Ascending aorta (tissue), 2 donors: ENCODE measurements at regions of chr4 and their contacts with region 1.

Region 1: GRCh38 chr4:145732895-145733880 is 53.2 kb downstream of the C4orf51 start:
- DNase-seq: peak; percentile 75 to 98
- H3K4me3 ChIP-seq: peak overlapping the region; percentile 74 to 77
- H3K27ac ChIP-seq: peak overlapping the region; percentile 99
- H3K4me1 ChIP-seq: peaks cover 13 to 32% of the 10 kb centered on the region in 2 donors
- H3K27me3 ChIP-seq: no peaks in the 10 kb centered on the region
- CTCF ChIP-seq: peak in 1 of 3 experiments; percentile 5

Region 2: DNA sequence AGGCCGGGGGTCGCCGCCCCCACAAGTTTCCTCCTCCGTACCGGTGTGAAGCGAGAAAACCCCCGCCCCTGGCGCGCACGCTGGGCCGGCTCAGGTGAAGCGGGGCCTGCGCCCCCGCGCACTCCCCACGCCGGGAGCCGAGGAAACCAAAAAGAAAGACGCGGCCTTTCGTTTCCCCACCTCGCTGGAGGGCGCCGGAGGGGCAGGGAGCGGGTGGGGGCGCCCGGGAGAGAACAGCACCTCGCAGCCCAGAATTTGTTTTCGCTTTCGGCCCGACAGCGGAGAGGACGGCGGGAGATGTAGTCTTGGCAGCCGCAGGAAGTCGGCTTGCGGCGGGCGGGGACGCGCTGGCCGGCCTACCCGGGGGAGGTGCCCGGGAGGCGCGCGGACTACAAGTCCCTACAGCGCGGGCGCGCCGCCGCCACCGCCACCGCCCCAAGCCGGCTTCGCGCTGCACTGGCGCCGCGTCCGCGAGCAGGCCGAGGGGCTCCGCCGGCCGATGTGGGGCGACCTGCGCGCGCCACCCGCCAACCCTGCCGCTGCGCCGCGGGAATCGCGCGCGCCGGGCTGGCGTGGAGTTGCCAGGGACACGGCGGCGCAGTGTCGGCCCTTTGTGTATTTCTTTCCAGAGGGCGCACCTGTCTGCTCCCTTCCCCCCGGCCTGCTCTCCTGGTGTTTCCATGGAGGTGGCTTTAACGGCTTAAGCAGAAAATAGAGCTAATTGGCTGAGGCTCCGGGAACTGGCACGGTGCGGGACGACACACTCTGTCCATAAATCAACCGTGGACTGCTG is 552.7 kb before region 1 on chr4 and contains the start of gene OTUD4:
- intact Hi-C with region 1: loop called (anchors 2 kb)
- DNase-seq: peak; percentile 84 to 98
- H3K4me3 ChIP-seq: peak within 1 kb of the TSS; percentile 91 to 93
- H3K27ac ChIP-seq: peak within 1 kb of the TSS; percentile 94 to 99
- H3K4me1 ChIP-seq: peaks cover 0 to 14% of the 10 kb centered on the region in 2 donors
- H3K27me3 ChIP-seq: no peaks in the 10 kb centered on the region
- CTCF ChIP-seq: peak in 2 of 3 experiments; percentile 13 to 23
- total RNA-seq, gene OTUD4: 81.4 TPM

Region 3: DNA sequence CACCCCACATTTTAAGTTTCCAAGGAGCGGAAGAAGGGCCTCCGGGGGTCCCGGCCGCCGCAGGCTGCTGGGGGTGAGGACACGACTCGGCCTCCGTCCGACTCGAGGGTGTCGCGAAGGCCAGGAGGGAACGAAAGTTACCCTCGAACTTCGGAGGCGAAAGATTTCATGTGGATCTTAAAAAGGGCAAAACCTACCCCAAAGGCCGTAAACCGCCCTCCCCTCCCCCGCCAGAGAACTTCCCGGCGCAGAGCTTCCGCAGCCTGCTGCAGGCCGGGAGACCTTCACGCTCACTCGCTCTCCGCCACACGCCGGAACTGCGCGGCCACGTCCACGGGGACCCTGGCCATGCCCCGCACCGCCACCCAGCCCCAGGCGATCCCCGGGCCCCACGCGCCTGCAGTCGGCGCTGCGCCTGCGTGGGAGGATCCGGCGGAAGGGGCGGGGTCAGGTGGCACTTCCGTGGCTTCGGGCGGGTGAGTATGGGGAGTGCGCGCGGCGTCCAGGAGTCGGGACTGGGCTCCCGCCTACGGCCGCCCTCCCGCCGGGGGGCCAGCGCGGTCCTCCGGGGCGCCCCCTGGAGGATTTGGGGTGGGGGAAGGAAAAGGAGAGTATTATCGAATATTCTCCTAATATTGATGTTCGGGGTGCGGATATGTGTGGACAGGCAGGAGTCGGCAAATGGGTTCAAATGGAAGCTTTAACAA is 114.1 kb before region 1 on chr4 and contains the start of gene MMAA:
- intact Hi-C with region 1: loop called (anchors 2 kb)
- DNase-seq: peak; percentile 82 to 97
- H3K4me3 ChIP-seq: peak within 1 kb of the TSS; percentile 78 to 89
- H3K27ac ChIP-seq: peak within 1 kb of the TSS; percentile 95 to 98
- H3K4me1 ChIP-seq: peaks cover 0 to 5% of the 10 kb centered on the region in 2 donors
- H3K27me3 ChIP-seq: no peaks in the 10 kb centered on the region
- CTCF ChIP-seq: peak; percentile 44 to 67 (median 67)
- total RNA-seq, gene MMAA: 3.9 TPM

Region 4: GRCh38 chr4:145887241-145887991 is 154.2 kb after region 1 on chr4:
- intact Hi-C with region 1: loop called (anchors 2 kb)
- DNase-seq: no peak
- H3K4me3 ChIP-seq: peak overlapping the region in 1 of 2 donors; percentile 12
- H3K27ac ChIP-seq: peak overlapping the region; percentile 78 to 81
- H3K4me1 ChIP-seq: peaks cover 5 to 16% of the 10 kb centered on the region in 2 donors
- H3K27me3 ChIP-seq: no peaks in the 10 kb centered on the region
- CTCF ChIP-seq: peak in 1 of 3 experiments; percentile 28

Region 5: GRCh38 chr4:146522098-146522868 is 789.1 kb after region 1 on chr4:
- intact Hi-C with region 1: loop called (anchors 5 kb)
- DNase-seq: peak; percentile 53 to 94
- H3K4me3 ChIP-seq: peak overlapping the region; percentile 81 to 94
- H3K27ac ChIP-seq: peak overlapping the region; percentile 63 to 78
- H3K4me1 ChIP-seq: no peaks in the 10 kb centered on the region
- H3K27me3 ChIP-seq: no peaks in the 10 kb centered on the region
- CTCF ChIP-seq: no peak